Right lobe of liver (tissue), 6 donors: ENCODE measurements at regions of chr13 and their contacts with region 1.

Region 1: DNA sequence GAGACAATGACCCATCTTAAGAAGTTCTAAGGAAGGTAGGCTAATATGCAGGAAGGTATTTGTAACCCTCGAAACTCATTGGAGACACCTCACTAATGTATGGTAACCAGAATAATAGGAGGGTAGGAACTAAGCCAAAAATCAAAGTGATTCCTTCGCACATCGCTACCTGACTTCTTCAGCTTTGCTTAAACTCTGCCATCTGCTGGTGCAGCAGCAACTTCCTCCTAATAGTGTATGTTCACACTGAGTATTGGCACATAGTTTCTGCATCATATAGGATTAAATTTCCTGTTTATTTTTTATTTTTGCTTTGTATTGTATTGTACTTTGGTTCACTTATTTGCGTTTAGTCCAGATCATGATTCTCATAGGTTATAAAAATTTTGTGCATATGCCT is 676.2 kb downstream of the GPC5 start:
- DNase-seq: peak in 1 of 3 donors; percentile 20
- ATAC-seq: peak; percentile 80 to 89 (median 84)
- H3K4me3 ChIP-seq: no peak overlapping the region
- H3K27ac ChIP-seq: no peak overlapping the region
- H3K4me1 ChIP-seq: peaks cover 0 to 3% (median 0%) of the 10 kb centered on the region in 4 donors
- H3K27me3 ChIP-seq: no peaks in the 10 kb centered on the region
- CTCF ChIP-seq: peak; percentile 45 to 73 (median 62)
- POLR2A ChIP-seq: no peak

Region 2: DNA sequence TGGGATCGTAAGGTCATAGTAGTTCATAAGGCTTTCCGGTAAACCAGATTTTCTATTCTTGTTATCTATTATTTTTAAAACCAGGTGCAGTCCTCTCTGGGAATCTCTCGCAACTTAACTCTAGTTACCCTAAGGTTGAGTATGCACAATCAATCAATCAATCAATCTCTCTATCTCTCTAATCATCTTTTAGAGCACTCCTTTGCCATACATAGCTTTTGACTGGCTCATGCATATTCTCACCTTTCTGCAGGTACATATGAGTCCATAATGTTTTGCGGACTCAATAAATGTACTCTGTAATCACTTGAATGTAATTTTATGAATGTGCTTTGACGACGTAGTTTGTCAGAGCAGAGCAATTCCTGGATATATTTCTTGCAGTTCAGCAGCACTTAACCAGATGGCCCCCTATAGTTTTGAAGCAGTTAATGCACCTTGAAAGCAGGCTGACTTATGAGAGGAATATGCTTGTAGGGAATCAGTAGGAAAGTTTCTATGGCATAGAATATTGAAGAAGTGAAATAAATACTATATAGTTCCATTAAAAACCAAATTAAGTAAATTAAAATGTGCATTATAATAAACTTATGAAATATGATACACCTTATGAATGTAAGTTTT is 151.6 kb before region 1 on chr13:
- intact Hi-C with region 1: no loop called
- DNase-seq: no peak
- ATAC-seq: no peak
- H3K4me3 ChIP-seq: no peak overlapping the region
- H3K27ac ChIP-seq: no peak overlapping the region
- H3K4me1 ChIP-seq: no peaks in the 10 kb centered on the region
- H3K27me3 ChIP-seq: no peaks in the 10 kb centered on the region
- CTCF ChIP-seq: no peak
- POLR2A ChIP-seq: no peak

Region 3: DNA sequence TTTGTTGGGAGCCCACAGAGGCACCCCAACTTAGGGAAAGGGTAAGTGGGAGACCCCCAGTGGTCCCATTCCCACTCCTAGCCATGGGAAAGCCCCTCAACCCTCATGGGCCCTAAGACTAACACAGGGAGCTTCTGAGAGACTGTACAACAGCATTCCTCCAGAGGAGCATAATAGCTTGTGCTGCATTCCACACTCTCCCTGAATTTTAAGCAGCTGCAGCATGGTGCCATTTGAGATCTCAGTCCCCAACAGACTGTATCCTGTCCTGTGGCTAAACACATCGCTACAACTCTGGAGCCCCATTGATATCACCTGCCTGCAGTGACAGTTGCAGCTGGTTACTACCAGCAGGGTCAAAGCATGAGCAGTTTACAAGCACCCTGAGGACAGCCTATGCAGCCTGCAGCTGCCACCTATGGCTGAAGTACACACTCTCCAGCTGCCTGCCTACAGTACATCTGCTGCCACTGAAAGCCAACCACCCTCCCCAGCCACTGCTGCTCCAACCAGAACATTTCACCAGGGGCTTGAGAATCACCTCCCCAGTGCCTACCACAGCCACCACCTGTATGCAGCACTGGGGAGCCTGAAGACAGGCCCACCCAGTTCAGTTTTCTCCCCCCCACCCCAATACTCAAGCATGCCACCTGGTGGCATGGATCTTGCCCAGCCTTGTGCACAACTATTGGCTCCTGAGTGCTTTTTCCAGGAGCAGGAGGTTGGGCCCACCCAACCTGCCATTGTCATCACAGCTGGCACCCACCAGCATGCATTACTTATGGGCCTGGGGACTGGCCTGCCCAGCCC is 118.9 kb before region 1 on chr13:
- intact Hi-C with region 1: loop called in 1 of 2 experiments (anchors 10 kb)
- DNase-seq: no peak
- ATAC-seq: no peak
- H3K4me3 ChIP-seq: no peak overlapping the region
- H3K27ac ChIP-seq: no peak overlapping the region
- H3K4me1 ChIP-seq: peaks cover 0 to 2% (median 0%) of the 10 kb centered on the region in 4 donors
- H3K27me3 ChIP-seq: no peaks in the 10 kb centered on the region
- CTCF ChIP-seq: no peak
- POLR2A ChIP-seq: no peak